Sciatic nerve (tissue), 2 donors: ENCODE measurements at regions of chr18 and their contacts with region 1.

Region 1: GRCh38 chr18:77054606-77055428 is 77.8 kb downstream of the MBP start:
- DNase-seq: peak; percentile 92
- ATAC-seq: peak; percentile 89

Region 2: GRCh38 chr18:77000527-77000926 is 54.3 kb before region 1 on chr18:
- intact Hi-C with region 1: loop called (anchors 5 kb)
- DNase-seq: no peak
- ATAC-seq: peak; percentile 45

Region 3: GRCh38 chr18:77012806-77013541 is 41.8 kb before region 1 on chr18:
- intact Hi-C with region 1: loop called (anchors 1 kb)
- DNase-seq: no peak
- ATAC-seq: no peak

Region 4: DNA sequence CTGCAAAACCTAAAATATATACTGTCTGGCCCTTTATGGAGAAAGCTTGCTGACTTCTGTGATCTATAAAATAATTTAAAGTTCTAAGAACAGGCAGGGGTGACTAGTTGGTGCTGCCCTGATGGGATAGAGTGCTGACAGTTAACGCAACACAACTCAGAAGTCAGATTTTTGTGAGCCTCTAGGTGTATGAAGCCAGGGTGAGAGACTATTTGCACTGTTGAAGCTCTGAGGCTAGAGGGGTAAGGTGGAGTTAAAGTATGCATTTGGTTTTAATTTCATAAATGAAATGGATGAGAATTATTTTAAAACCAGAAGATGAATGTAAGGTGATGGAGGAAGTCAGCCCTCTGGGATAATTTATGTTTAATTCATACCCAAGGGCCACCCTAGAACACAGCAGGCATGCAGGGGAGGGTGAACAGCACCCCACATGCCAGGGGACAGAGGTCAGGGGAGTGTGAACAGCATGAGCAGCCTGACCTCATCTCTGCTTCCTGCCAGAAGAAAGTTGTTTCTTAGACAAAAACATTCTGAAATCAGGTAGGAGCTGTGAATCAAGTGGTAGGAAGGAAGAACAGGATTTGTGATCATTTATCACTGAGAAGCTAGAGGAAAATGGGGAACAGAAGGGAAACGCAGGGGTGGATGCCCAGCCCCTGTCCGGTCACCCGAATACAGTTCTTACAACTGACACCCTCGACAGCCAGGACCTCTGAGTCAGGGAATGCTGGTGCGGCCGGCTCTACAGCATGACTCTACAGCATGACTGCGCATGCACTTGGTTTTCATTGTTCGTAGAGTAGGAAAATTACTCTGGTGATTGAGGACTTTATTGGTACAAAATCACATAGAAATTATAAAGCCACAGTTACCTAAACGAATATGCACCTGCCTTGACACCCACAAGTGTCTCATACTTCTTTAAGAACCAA is 15.4 kb before region 1 on chr18:
- intact Hi-C with region 1: no loop called
- DNase-seq: no peak
- ATAC-seq: no peak

Region 5: GRCh38 chr18:77079954-77080682 is 25.3 kb after region 1 on chr18:
- intact Hi-C with region 1: no loop called
- DNase-seq: no peak
- ATAC-seq: peak; percentile 26